ENCODE measurements at regions of chr9 and their contacts with region 1.

Region 1: DNA sequence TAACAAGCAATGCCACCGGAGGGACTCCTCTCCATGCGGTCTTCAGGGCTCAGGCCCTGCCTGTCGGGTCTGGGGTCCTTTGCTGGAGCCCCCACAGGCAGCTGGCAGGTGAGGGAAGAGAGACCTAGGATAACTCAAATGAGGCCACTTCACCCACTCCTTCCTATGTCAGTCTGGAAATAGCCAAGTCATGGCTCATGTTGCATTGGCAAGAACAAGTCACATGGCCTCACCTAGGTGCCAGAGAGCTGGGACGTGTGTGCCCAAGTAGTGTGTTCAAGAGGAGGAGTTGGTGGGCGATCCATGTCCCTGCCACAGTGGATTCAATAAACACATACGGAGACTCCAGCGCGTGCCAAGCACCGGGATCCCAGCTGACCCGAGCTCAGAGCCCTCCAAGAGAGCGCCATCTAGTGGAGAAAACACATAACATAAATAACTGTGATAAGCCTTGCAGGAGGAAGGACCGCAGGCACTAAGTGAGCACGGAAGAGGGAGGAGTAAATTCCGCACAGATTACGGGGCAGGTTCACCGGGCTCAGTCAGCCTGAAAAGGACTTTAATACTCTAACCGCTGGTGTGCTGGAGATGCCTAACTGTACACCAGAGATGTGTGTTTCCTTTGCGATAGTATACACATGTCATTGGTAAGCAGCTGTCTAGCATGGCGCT is 580.8 kb downstream of the CCDC171 start:
- DNase-seq: no peak
- ATAC-seq: peak; percentile 90
- H3K4me3 ChIP-seq: no peak overlapping the region
- H3K27ac ChIP-seq: no peak overlapping the region
- H3K4me1 ChIP-seq: no peaks in the 10 kb centered on the region
- H3K27me3 ChIP-seq: no peaks in the 10 kb centered on the region; a peak in 1 of 4 replicates
- CTCF ChIP-seq: peak; percentile 59 to 65 (median 64)
- EP300 ChIP-seq: no peak
- POLR2A ChIP-seq: no peak
- RAD21 ChIP-seq: peak; percentile 71

Region 2: DNA sequence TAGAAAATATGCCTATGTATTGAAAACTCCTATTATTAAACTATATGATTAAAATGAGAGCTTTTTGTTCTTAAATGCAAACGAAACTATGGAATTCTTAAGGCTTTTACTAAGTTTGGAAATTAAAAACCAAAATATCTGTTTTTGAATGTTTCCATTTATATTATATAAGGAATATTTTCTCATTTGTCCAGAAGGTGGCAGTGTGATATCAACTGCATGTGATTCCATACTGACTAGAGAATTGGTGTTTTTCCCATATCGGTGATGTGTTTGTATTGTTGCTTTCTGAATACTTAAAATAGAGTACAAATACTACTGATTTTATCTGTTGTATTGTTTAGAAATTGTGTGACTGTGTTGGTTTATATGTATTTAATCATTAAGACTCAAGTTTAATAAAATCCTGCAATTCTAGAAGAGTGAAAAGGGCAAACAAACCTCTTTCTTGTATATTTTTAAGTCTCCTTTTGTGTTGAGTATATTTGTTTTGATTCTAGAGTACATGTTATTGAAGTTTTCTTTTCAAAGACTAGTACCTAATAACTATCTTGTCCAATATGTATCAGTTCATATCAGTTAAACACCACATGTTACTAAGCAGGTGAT is 260.0 kb before region 1 on chr9:
- CTCF ChIA-PET with region 1: interaction called, 49 read pairs
- POLR2A ChIA-PET with region 1: no interaction called
- RAD21 ChIA-PET with region 1: interaction called, 5 read pairs
- SMC1A ChIA-PET with region 1: interaction called, 30 read pairs
- in situ Hi-C with region 1: loop called (anchors 10 kb)
- intact Hi-C with region 1: loop called (anchors 1 kb)
- DNase-seq: no peak
- ATAC-seq: peak; percentile 79
- H3K4me3 ChIP-seq: no peak overlapping the region
- H3K27ac ChIP-seq: no peak overlapping the region
- H3K4me1 ChIP-seq: no peaks in the 10 kb centered on the region
- H3K27me3 ChIP-seq: no peaks in the 10 kb centered on the region
- CTCF ChIP-seq: peak; percentile 44 to 59 (median 55); a peak in 5 of 6 replicates
- EP300 ChIP-seq: no peak
- POLR2A ChIP-seq: no peak
- RAD21 ChIP-seq: peak; percentile 76

Region 3: DNA sequence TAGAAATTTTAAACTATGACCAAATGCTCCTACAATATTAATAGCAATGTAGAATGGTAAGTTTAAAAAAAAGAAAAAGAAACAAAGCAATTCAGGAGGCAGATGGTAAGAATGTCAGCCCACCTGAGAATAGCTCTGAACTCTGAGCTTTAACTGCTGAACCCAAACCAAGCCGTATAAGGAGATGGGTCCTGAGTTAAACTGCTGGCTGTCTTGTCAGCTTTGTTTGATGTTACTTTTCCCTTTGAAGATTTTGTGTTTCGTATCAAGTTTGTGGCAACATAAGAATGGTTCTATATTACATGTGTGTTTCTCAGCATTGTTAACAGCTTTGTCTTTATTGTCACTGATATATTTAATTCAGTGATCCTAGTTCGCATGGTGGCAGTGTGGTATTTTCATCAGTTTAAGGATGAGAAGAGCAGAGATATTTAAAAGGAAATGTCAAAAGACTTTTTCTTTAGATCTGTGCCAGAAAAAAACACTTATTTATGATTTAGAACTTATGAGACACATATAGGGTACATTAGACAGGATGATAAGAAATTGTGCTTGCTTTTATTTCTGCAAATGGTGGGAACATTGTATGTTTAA is 190.8 kb before region 1 on chr9:
- CTCF ChIA-PET with region 1: interaction called, 11 read pairs
- POLR2A ChIA-PET with region 1: no interaction called
- RAD21 ChIA-PET with region 1: interaction called, 3 read pairs
- SMC1A ChIA-PET with region 1: no interaction called
- in situ Hi-C with region 1: no loop called
- intact Hi-C with region 1: no loop called
- DNase-seq: no peak
- ATAC-seq: no peak
- H3K4me3 ChIP-seq: no peak overlapping the region
- H3K27ac ChIP-seq: no peak overlapping the region
- H3K4me1 ChIP-seq: no peaks in the 10 kb centered on the region
- H3K27me3 ChIP-seq: no peaks in the 10 kb centered on the region
- CTCF ChIP-seq: no peak
- EP300 ChIP-seq: no peak
- POLR2A ChIP-seq: no peak
- RAD21 ChIP-seq: no peak

Region 4: GRCh38 chr9:16039218-16039987 is 94.3 kb before region 1 on chr9:
- CTCF ChIA-PET with region 1: interaction called, 41 read pairs
- POLR2A ChIA-PET with region 1: no interaction called
- RAD21 ChIA-PET with region 1: no interaction called
- SMC1A ChIA-PET with region 1: interaction called, 4 read pairs
- in situ Hi-C with region 1: no loop called
- intact Hi-C with region 1: loop called (anchors 1 kb)
- DNase-seq: no peak
- ATAC-seq: peak; percentile 66
- H3K4me3 ChIP-seq: no peak overlapping the region
- H3K27ac ChIP-seq: no peak overlapping the region
- H3K4me1 ChIP-seq: no peaks in the 10 kb centered on the region
- H3K27me3 ChIP-seq: no peaks in the 10 kb centered on the region; a peak in 1 of 4 replicates
- CTCF ChIP-seq: peak; percentile 17 to 34 (median 31); a peak in 2 of 6 replicates
- EP300 ChIP-seq: no peak
- POLR2A ChIP-seq: no peak
- RAD21 ChIP-seq: peak; percentile 9; the same call in 1 of the 2 replicates